Right ventricle myocardium superior (tissue), 1 donor: ENCODE measurements at regions of chr11 and their contacts with region 1.

Region 1: GRCh38 chr11:17063171-17064002 is 14.1 kb downstream of the RPS13 start:
- DNase-seq: peak; percentile 75
- ATAC-seq: peak; percentile 95

Region 2: DNA sequence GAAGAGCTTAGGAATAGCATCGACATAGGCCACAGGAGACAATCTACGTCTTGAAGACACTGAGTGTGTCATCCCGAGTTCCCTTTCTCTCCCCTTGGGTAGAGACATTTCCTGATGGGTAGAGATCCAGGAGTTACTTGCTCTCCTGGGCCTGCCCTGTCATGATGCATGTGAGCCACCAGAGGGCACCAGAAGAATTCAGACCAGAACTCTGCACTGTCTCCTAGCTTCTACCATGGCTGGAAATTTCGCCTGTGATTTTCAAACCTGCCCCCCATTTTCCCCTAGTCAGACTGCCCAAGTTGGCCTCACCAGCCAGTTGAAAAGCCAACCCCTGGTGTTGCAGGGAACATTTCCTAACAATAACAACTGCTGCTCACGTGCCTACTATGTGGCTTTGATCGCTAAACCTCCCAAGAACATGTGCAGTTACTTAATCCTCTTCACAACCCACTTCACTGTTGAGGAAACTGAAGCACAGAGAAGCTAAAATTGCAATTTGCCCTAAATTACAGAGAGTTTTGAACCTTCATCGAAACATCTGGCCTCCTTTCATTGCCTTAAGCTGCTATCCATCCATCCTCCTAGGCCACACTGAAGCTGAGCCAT is 277.8 kb before region 1 on chr11:
- intact Hi-C with region 1: loop called (anchors 5 kb)
- DNase-seq: peak; percentile 66
- ATAC-seq: peak; percentile 86

Region 3: GRCh38 chr11:16945671-16946469 is 117.5 kb before region 1 on chr11:
- intact Hi-C with region 1: loop called (anchors 2 kb)
- DNase-seq: peak; percentile 62
- ATAC-seq: peak; percentile 94